Activated CD8-positive, alpha-beta T cell treated with anti-CD3 and anti-CD28 coated beads, Interleukin-2, amount 10 ng/mL, durations not matched to agents 7 days and 5 days (primary cell): ENCODE measurements at regions of chr3 and their contacts with region 1.

Region 1: GRCh38 chr3:50337191-50337841 is 3.3 kb downstream of the RASSF1 start:
- DNase-seq: peak; percentile 99
- ATAC-seq: peak; percentile 75
- H3K4me3 Mint-ChIP-seq: peak overlapping the region; percentile 92
- H3K27ac Mint-ChIP-seq: peak overlapping the region; percentile 96
- H3K4me1 Mint-ChIP-seq: peaks cover 56% of the 10 kb centered on the region
- H3K27me3 Mint-ChIP-seq: no peaks in the 10 kb centered on the region

Region 2: DNA sequence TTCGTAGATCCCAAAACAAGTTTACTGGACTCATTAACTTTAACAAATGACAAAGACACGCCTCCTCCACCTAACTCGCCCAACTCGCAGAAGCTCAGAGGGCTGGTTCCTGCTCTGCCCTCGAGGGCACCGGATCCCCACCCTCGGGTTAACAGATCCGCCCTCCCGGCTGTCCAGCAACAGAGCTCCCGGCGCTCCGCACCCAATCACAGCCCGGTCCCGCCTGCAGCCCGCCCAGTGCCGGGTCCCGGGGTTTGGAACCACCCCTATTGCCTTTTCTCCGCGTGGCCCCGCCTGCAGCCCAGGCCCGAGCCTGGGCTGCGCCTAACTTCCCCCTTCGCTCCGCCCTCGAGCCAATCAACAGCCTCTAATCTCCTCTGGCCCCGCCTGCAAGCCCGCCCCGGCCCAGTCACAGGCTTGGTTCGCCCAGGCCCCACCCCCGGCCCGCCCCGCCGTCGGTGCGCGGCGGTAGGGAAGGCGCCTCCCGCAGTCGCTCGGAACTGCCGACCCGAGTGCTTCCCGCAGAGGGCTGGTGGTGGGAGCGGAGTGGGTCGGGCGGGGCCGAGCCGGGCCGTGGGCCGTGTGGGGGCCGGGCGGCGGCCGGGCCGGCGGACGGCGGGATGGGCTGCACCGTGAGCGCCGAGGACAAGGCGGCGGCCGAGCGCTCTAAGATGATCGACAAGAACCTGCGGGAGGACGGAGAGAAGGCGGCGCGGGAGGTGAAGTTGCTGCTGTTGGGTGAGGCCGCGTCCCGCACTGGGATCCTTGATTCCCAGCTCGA is 101.4 kb before region 1 on chr3 and contains the start of gene GNAI2:
- CTCF ChIA-PET with region 1: interaction called, 3 read pairs
- POLR2A ChIA-PET with region 1: interaction called, 16 read pairs
- DNase-seq: peak; percentile 99
- ATAC-seq: peak; percentile 94
- H3K4me3 Mint-ChIP-seq: peak within 1 kb of the TSS; percentile 99
- H3K27ac Mint-ChIP-seq: peak within 1 kb of the TSS; percentile 93
- H3K4me1 Mint-ChIP-seq: peaks cover 42% of the 10 kb centered on the region
- H3K27me3 Mint-ChIP-seq: no peaks in the 10 kb centered on the region
- total RNA-seq, gene GNAI2: 515 to 531 TPM

Region 3: GRCh38 chr3:50298836-50299637 is 38.3 kb before region 1 on chr3 and contains the starts of genes HYAL3 and NAA80:
- CTCF ChIA-PET with region 1: interaction called, 11 read pairs
- POLR2A ChIA-PET with region 1: interaction called, 27 read pairs
- DNase-seq: peak; percentile 100
- ATAC-seq: peak; percentile 87
- H3K4me3 Mint-ChIP-seq: peak within 1 kb of the TSS; percentile 97
- H3K27ac Mint-ChIP-seq: peak within 1 kb of the TSS; percentile 99
- H3K4me1 Mint-ChIP-seq: peaks cover 32% of the 10 kb centered on the region
- H3K27me3 Mint-ChIP-seq: no peaks in the 10 kb centered on the region
- total RNA-seq, gene HYAL3: 9.7 to 12.7 TPM
- total RNA-seq, gene NAA80: 26.8 to 28.5 TPM

Region 4: DNA sequence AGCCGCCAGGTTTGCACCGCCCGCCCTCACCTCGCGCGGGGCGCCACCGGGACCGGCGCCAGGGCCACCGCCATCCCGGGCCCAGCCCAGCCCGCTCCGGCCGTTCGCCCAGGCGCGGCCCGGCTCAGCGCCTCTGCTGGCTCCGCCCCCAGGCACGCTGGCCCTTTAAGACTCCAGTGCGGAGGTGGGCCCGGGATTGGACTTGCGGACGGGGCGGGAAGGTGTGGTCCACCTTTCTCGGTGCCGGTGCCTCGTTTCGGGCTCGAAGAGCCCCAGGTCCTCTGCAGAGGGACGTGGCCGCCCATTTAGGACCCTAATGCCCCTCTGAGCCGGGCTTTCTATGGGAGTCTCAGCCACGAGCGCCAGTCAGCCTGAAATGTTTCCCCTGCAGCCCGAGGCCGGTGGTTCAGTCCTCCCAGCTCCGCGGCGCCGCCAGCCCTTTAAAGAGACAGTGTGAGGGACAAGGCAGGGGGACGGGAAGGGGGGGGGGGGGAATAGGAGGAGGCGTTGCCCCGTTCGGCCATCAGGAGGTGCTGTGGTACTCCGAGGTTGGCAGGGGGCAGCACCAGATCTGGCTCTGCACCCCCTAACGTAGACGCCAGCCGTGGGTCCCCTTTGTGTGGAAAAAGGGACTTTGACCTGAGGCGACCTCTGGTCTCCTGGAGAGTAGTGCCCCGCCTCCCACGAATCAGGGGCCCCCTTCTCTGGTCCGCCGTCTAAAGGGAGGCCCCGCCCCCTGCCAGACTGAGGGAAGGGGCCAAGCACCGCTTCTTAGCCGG is 15.8 kb before region 1 on chr3:
- CTCF ChIA-PET with region 1: interaction called, 42 read pairs
- POLR2A ChIA-PET with region 1: interaction called, 20 read pairs
- DNase-seq: peak; percentile 88
- ATAC-seq: peak; percentile 82
- H3K4me3 Mint-ChIP-seq: peak overlapping the region; percentile 89
- H3K27ac Mint-ChIP-seq: peak overlapping the region; percentile 95
- H3K4me1 Mint-ChIP-seq: peaks cover 43% of the 10 kb centered on the region
- H3K27me3 Mint-ChIP-seq: no peaks in the 10 kb centered on the region

Region 5: GRCh38 chr3:50350527-50351322 is 13.4 kb after region 1 on chr3 and contains the starts of genes CYB561D2 and NPRL2:
- CTCF ChIA-PET with region 1: interaction called, 21 read pairs
- POLR2A ChIA-PET with region 1: interaction called, 35 read pairs
- DNase-seq: peak; percentile 99
- ATAC-seq: peak; percentile 92
- H3K4me3 Mint-ChIP-seq: peak within 1 kb of the TSS; percentile 96
- H3K27ac Mint-ChIP-seq: peak within 1 kb of the TSS; percentile 99
- H3K4me1 Mint-ChIP-seq: peaks cover 68% of the 10 kb centered on the region
- H3K27me3 Mint-ChIP-seq: no peaks in the 10 kb centered on the region
- total RNA-seq, gene CYB561D2: 42.5 to 43.6 TPM
- total RNA-seq, gene NPRL2: 59.8 to 60.3 TPM

Region 6: DNA sequence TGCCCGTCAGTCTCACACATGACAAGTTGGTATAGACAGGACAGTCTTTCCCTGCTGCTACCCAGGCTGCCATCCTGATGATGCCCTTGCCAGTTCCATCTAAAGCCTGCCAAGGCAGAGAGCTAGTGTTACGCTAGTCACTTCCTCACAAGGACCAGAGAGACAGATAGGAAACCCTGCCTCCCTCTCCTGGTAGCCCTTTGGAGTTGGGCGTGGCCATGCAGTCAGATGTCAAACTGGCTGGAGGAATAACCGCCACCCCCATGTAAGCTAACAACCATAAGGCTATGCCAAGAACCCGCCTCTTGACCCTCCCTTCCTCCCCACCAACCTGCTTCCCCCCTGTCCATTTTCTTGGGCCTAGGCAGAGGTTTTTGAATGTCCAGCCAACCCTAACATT is 19.2 kb after region 1 on chr3:
- CTCF ChIA-PET with region 1: interaction called, 11 read pairs
- POLR2A ChIA-PET with region 1: interaction called, 35 read pairs
- DNase-seq: no peak
- ATAC-seq: no peak
- H3K4me3 Mint-ChIP-seq: peak overlapping the region; percentile 96
- H3K27ac Mint-ChIP-seq: no peak overlapping the region
- H3K4me1 Mint-ChIP-seq: peaks cover 55% of the 10 kb centered on the region
- H3K27me3 Mint-ChIP-seq: no peaks in the 10 kb centered on the region

Region 7: GRCh38 chr3:50580683-50581458 is 243.6 kb after region 1 on chr3:
- CTCF ChIA-PET with region 1: no interaction called
- POLR2A ChIA-PET with region 1: no interaction called
- DNase-seq: no peak
- ATAC-seq: peak; percentile 40
- H3K4me3 Mint-ChIP-seq: no peak overlapping the region
- H3K27ac Mint-ChIP-seq: peak overlapping the region; percentile 84
- H3K4me1 Mint-ChIP-seq: peaks cover 94% of the 10 kb centered on the region
- H3K27me3 Mint-ChIP-seq: no peaks in the 10 kb centered on the region

Region 8: DNA sequence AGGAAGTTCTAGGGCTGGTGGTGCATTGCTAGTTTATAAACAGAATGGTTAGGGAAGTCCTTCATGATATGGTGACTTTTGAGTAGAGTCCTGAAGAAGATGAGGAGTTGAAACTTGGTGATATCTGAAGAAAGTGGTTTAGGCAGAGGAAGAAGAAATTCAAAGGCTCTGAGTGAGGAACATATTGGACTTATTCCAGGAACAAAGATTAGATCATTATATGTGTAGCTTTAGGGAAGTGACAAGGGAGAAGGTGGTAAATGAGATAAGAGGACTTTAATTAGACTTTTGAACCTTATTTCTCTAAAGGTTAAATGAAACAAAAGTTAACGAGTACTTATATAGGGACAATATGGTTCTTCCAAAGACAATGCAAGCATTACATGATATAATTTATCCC is 624.1 kb after region 1 on chr3:
- CTCF ChIA-PET with region 1: no interaction called
- POLR2A ChIA-PET with region 1: no interaction called
- DNase-seq: no peak
- ATAC-seq: no peak
- H3K4me3 Mint-ChIP-seq: no peak overlapping the region
- H3K27ac Mint-ChIP-seq: no peak overlapping the region
- H3K4me1 Mint-ChIP-seq: no peaks in the 10 kb centered on the region
- H3K27me3 Mint-ChIP-seq: peaks cover 23% of the 10 kb centered on the region